H1 (cell line): ENCODE measurements at regions of chr13 and their contacts with region 1.

Region 1: GRCh38 chr13:29595380-29596063 is at the start of gene SLC7A1:
- DNase-seq: peak; percentile 72 to 84
- H3K4me3 ChIP-seq: peak within 1 kb of the TSS; percentile 70 to 91 (median 86)
- H3K27ac ChIP-seq: peak within 1 kb of the TSS; percentile 90
- H3K4me1 ChIP-seq: peaks cover 0 to 10% (median 6%) of the 10 kb centered on the region in 4 experiments
- H3K27me3 ChIP-seq: peaks cover 0 to 2% (median 0%) of the 10 kb centered on the region in 4 experiments; a peak in 1 of 7 replicates
- CTCF ChIP-seq: 0 out of 4 replicates have a peak, but pooled peaks of 1 of the 3 experiments have one; percentile 2
- EP300 ChIP-seq: no peak; a peak in 1 of 3 replicates
- POLR2A ChIP-seq: peak in 1 of 2 experiments; percentile 31
- RAD21 ChIP-seq: peak in 1 of 2 experiments; percentile 20; a peak in 1 of 4 replicates
- total RNA-seq, gene SLC7A1: 107 and 114 TPM in 2 replicates

Region 2: DNA sequence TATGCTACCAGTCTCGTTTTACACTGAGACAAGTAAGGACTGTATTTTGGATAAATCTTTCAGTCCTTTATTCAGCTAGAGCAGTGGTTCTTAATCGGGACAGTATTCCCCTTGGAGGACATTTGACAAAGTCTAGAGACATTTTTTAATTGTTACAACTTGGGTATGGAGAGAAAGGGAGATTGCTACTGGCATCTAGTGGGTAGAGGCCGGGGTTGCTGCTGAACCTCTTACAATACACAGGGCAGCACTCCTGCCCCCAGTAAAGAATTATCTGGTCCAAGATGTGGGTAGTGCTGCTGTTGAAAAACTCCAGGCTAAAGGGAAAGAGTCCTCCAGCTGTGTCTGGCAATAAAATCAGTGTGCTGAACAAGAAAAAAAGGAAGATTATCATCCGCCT is 334.8 kb before region 1 on chr13:
- CTCF ChIA-PET with region 1: no interaction called
- POLR2A ChIA-PET with region 1: no interaction called
- DNase-seq: no peak
- H3K4me3 ChIP-seq: no peak overlapping the region
- H3K27ac ChIP-seq: no peak overlapping the region
- H3K4me1 ChIP-seq: no peaks in the 10 kb centered on the region
- H3K27me3 ChIP-seq: no peaks in the 10 kb centered on the region
- CTCF ChIP-seq: peak; percentile 18 to 48 (median 34)
- EP300 ChIP-seq: no peak
- POLR2A ChIP-seq: no peak
- RAD21 ChIP-seq: peak; percentile 67 to 73

Region 3: GRCh38 chr13:29369060-29369743 is 226.3 kb before region 1 on chr13:
- CTCF ChIA-PET with region 1: no interaction called
- POLR2A ChIA-PET with region 1: no interaction called
- DNase-seq: no peak
- H3K4me3 ChIP-seq: no peak overlapping the region
- H3K27ac ChIP-seq: no peak overlapping the region
- H3K4me1 ChIP-seq: no peaks in the 10 kb centered on the region
- H3K27me3 ChIP-seq: no peaks in the 10 kb centered on the region
- CTCF ChIP-seq: peak in 2 of 3 experiments; percentile 60 to 64; a peak in 3 of 4 replicates
- EP300 ChIP-seq: no peak
- POLR2A ChIP-seq: no peak
- RAD21 ChIP-seq: peak; percentile 82 to 86

Region 4: GRCh38 chr13:29384466-29384865 is 211.1 kb before region 1 on chr13:
- CTCF ChIA-PET with region 1: no interaction called
- POLR2A ChIA-PET with region 1: no interaction called
- DNase-seq: no peak
- H3K4me3 ChIP-seq: no peak overlapping the region
- H3K27ac ChIP-seq: no peak overlapping the region
- H3K4me1 ChIP-seq: no peaks in the 10 kb centered on the region
- H3K27me3 ChIP-seq: no peaks in the 10 kb centered on the region; a peak in 1 of 7 replicates
- CTCF ChIP-seq: no peak
- EP300 ChIP-seq: no peak
- POLR2A ChIP-seq: no peak
- RAD21 ChIP-seq: no peak

Region 5: GRCh38 chr13:29474991-29475390 is 120.5 kb before region 1 on chr13:
- CTCF ChIA-PET with region 1: no interaction called
- POLR2A ChIA-PET with region 1: no interaction called
- DNase-seq: no peak
- H3K4me3 ChIP-seq: no peak overlapping the region
- H3K27ac ChIP-seq: no peak overlapping the region
- H3K4me1 ChIP-seq: no peaks in the 10 kb centered on the region; a peak in 1 of 7 replicates
- H3K27me3 ChIP-seq: no peaks in the 10 kb centered on the region
- CTCF ChIP-seq: no peak
- EP300 ChIP-seq: no peak
- POLR2A ChIP-seq: no peak
- RAD21 ChIP-seq: no peak

Region 6: DNA sequence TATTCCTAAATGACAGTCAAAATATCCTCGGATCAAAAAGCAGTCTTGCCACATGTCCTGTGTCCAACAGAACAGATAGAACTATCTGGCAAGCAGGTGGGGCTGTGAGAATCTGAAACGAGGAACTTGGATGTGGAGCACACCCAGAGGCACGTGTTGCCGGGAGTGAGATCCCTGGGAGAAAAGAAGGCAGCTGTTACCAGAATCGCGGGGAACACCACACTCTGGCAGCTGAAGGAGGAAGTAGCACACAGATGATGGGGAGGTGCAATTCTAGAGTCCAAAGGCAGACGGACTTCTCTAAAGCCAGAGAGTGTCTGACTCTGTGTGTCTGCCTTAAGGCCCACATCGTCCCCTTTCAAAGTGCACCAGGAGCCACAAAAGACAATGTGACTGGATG is 22.3 kb before region 1 on chr13:
- CTCF ChIA-PET with region 1: no interaction called
- POLR2A ChIA-PET with region 1: interaction called, 18 read pairs
- DNase-seq: no peak
- H3K4me3 ChIP-seq: no peak overlapping the region
- H3K27ac ChIP-seq: no peak overlapping the region
- H3K4me1 ChIP-seq: peaks cover 5 to 19% (median 14%) of the 10 kb centered on the region in 4 experiments
- H3K27me3 ChIP-seq: no peaks in the 10 kb centered on the region
- CTCF ChIP-seq: no peak
- EP300 ChIP-seq: no peak
- POLR2A ChIP-seq: no peak
- RAD21 ChIP-seq: no peak

Region 7: DNA sequence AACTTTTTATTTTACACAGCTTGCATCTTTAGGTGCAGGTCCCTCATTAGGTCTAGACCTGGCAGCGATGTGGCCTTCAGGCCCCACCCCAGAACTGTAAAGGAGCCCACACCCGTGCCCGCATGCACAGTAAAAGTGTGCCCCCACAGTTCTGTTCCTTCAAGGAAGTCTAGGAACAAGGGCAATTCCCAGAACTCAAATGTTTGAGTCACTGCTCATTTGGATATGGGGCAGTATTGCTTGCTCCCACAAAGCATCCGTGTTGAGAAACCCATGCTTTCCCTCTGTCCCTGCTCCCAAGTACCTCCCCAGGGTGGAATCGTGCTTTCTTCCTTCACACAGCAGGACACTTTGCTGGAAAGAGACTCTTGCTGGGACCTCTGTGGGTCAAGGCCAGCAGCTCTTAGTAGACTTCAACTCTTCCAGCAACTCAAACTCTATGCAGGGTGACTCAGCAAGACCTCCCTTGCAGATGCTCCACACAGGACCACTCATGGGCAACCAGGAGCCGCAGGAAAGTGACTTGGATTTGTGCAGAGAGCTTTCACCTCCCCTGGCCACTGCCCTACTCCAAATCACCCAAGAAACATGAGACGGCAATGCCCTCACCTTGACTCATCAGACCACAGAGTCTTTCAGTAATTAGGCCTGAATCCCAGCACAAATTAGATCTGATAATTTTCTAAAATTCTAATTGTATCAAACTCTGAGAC is 12.3 kb before region 1 on chr13:
- CTCF ChIA-PET with region 1: interaction called, 5 read pairs
- POLR2A ChIA-PET with region 1: interaction called, 20 read pairs
- DNase-seq: no peak
- H3K4me3 ChIP-seq: no peak overlapping the region
- H3K27ac ChIP-seq: no peak overlapping the region
- H3K4me1 ChIP-seq: peaks cover 18 to 31% (median 25%) of the 10 kb centered on the region in 4 experiments
- H3K27me3 ChIP-seq: no peaks in the 10 kb centered on the region
- CTCF ChIP-seq: no peak
- EP300 ChIP-seq: no peak
- POLR2A ChIP-seq: no peak
- RAD21 ChIP-seq: no peak

Region 8: DNA sequence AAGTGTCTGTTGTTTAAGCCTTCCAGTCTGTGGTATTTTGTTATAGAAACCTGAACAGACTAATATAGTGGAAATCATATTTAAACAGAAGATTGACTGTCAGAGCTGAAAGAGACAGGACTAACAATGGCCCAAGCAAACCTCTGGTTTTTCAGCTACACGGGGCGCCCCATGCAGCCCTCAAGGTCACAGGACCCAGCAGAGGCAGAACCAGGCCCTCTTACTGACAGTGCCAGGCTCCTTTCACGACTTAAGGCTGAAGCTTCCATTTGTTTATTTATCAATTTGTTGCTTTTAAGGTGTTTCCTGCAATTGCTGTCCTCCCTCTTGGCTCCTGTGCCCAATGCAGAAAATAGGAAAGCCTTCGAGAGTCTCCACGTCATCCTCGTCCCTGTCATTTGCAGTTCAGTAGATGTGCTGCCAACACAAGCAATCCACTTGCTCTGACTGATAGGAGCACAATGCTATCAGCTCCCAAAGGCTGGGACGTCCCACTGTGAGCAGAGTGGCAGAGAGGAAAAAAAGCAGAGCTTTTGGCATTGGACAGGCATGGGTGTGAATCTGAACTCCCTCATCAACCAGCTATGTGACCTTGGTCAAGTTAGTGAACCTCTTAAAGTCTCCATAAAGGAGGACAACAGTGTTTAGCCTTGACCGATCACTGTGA is 10.5 kb after region 1 on chr13:
- CTCF ChIA-PET with region 1: interaction called, 4 read pairs
- POLR2A ChIA-PET with region 1: interaction called, 25 read pairs
- DNase-seq: no peak
- H3K4me3 ChIP-seq: no peak overlapping the region
- H3K27ac ChIP-seq: no peak overlapping the region
- H3K4me1 ChIP-seq: no peaks in the 10 kb centered on the region
- H3K27me3 ChIP-seq: no peaks in the 10 kb centered on the region
- CTCF ChIP-seq: no peak
- EP300 ChIP-seq: no peak
- POLR2A ChIP-seq: no peak
- RAD21 ChIP-seq: no peak